ENCODE measurements at regions of chr9 and their contacts with region 1.

Region 1: GRCh38 chr9:110427497-110428104 is 89.9 kb upstream of the TXNDC8 start:
- DNase-seq: no peak
- H3K4me3 ChIP-seq: no peak overlapping the region
- H3K27me3 ChIP-seq: no peaks in the 10 kb centered on the region
- CTCF ChIP-seq: peak; percentile 60

Region 2: GRCh38 chr9:110228960-110229359 is 198.6 kb before region 1 on chr9:
- CTCF ChIA-PET with region 1: no interaction called
- POLR2A ChIA-PET with region 1: no interaction called
- DNase-seq: no peak
- H3K4me3 ChIP-seq: no peak overlapping the region
- H3K27me3 ChIP-seq: no peaks in the 10 kb centered on the region; the same call in 1 of the 2 replicates
- CTCF ChIP-seq: no peak

Region 3: GRCh38 chr9:110440172-110440571 is 12.6 kb after region 1 on chr9:
- CTCF ChIA-PET with region 1: interaction called, 11 read pairs
- POLR2A ChIA-PET with region 1: no interaction called
- DNase-seq: peak; percentile 56
- H3K4me3 ChIP-seq: no peak overlapping the region
- H3K27me3 ChIP-seq: no peaks in the 10 kb centered on the region
- CTCF ChIP-seq: no peak

Region 4: DNA sequence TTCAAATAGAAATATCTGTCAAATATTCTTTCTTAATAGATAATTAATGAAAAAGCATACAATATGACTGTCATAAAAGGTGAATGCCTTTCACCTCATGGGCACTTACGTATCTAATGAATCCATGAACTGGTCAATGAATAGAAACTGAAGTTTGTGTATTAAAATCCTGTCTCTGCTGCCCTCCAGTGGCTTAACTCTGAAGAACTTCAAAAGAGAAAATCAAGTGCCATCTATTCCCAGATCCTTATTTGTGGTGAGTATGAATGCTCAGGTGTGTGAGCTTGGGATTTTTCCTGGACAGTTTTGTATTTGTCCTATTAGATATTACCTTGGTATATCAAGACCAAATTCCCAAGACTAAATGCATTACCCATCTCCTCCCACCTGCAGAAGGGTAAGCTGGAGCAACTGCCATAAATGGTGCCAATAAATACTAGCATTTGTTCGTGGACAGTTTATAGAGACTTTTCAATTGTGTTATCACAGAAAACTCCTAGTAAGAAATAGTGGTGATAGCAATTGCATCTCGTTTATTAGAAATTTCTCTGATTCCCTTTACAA is 195.9 kb after region 1 on chr9:
- CTCF ChIA-PET with region 1: interaction called, 13 read pairs
- POLR2A ChIA-PET with region 1: no interaction called
- DNase-seq: no peak
- H3K4me3 ChIP-seq: no peak overlapping the region
- H3K27me3 ChIP-seq: no peaks in the 10 kb centered on the region
- CTCF ChIP-seq: peak; percentile 49

Measured in BJ (cell line).